CD14-positive monocyte (primary cell): ENCODE measurements at regions of chr3 and their contacts with region 1.

Region 1: DNA sequence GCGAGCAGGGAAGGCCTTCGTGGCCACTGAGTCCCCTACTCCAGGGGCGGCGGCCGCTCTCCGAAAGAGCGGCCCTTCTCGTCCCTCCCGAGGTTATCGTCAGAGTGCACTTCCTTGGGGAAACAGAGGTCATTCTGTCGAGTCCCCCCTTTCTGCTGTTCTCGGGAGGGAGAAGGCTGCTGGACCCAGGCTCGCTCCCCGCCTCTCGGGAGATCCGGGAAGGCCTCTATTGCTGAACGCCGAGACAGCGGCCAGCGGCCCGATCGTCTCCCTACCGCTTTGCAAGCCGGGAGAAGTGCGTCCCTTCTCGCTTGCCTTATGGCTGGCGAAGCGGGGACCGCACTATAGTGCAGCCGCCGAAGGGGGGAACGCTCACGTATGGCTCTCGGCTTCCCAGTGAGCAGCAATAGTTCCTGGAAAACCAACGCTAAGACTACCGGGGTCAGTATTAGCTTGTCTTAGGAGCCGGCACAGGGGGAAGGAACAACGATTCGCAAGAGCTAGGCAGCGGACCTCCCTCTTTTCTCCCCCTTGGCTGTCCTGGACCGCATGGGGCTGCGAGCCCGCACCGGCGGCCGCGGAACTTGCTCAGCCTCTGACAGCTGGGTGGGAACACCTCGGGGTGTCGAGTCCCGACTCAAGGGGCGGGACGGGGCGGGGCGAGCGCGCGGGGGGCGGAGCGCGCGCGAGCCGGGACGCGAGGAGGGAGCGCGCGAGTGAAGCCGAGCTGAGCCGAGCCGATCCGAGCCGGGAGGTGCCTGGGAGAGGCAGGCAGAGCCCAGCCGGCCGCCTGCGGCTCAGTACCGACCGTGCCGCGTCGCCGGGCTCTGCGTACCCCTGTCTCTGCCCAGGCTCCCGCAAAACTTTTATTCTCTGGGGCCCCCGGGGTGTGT is 930 bp upstream of the PPM1L start:
- DNase-seq: peak; percentile 84 to 87 (median 85)
- H3K4me3 ChIP-seq: peak overlapping the region; percentile 61 to 93 (median 70)
- H3K4me3 Mint-ChIP-seq: peak overlapping the region; percentile 98 to 99
- H3K27ac ChIP-seq: peak overlapping the region; percentile 93
- H3K27ac Mint-ChIP-seq: peak overlapping the region; percentile 93 to 98 (median 97)
- H3K4me1 ChIP-seq: peaks cover 31 to 36% of the 10 kb centered on the region in 2 donors
- H3K4me1 Mint-ChIP-seq: peaks cover 38% of the 10 kb centered on the region
- H3K27me3 ChIP-seq: peaks cover 0 to 8% of the 10 kb centered on the region in 2 donors
- H3K27me3 Mint-ChIP-seq: peaks cover 4 to 16% (median 8%) of the 10 kb centered on the region in 3 donors
- CTCF ChIP-seq: no peak

Region 2: GRCh38 chr3:160565442-160566403 is 189.4 kb before region 1 on chr3 and contains the start of gene KPNA4:
- intact Hi-C with region 1: loop called in 1 of 2 experiments (anchors 10 kb)
- DNase-seq: peak; percentile 97 to 99 (median 98)
- H3K4me3 ChIP-seq: peak within 1 kb of the TSS; percentile 83 to 95 (median 85)
- H3K4me3 Mint-ChIP-seq: peak within 1 kb of the TSS; percentile 97 to 98
- H3K27ac ChIP-seq: peak within 1 kb of the TSS; percentile 93 to 96
- H3K27ac Mint-ChIP-seq: peak within 1 kb of the TSS; percentile 96 to 99 (median 98)
- H3K4me1 ChIP-seq: peaks cover 31 to 62% of the 10 kb centered on the region in 2 donors
- H3K4me1 Mint-ChIP-seq: peaks cover 74% of the 10 kb centered on the region
- H3K27me3 ChIP-seq: no peaks in the 10 kb centered on the region
- H3K27me3 Mint-ChIP-seq: peaks cover 0 to 5% (median 0%) of the 10 kb centered on the region in 3 donors
- CTCF ChIP-seq: no peak
- polyA plus RNA-seq, gene KPNA4: 4.4 to 14.7 (median 4.5) TPM

Region 3: DNA sequence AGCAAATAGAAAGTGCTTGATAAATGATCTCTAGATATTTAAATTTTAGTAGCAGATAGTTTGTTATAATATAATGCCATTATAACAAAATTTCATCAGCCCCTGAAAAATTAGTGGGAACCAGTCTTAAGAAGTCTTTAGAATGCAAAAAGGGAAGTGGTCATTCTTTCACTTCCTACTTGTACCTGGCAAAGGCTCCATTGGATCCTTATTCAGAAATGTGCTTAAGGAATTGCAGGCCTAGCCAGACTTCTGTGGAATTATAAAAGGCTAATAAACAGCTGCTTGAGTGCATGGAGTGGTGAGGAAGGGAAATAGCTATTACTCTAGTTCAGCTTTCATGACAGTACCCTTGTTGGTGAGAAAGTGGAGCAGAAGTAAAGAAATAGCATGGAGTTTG is 25.1 kb after region 1 on chr3:
- intact Hi-C with region 1: loop called in 1 of 2 experiments (anchors 2 kb)
- DNase-seq: peak; percentile 39 to 83 (median 69)
- H3K4me3 ChIP-seq: no peak overlapping the region
- H3K4me3 Mint-ChIP-seq: no peak overlapping the region
- H3K27ac ChIP-seq: no peak overlapping the region
- H3K27ac Mint-ChIP-seq: peak overlapping the region in 1 of 7 donors; percentile 9
- H3K4me1 ChIP-seq: peaks cover 21 to 28% of the 10 kb centered on the region in 2 donors
- H3K4me1 Mint-ChIP-seq: peaks cover 28% of the 10 kb centered on the region
- H3K27me3 ChIP-seq: no peaks in the 10 kb centered on the region
- H3K27me3 Mint-ChIP-seq: no peaks in the 10 kb centered on the region
- CTCF ChIP-seq: no peak

Region 4: DNA sequence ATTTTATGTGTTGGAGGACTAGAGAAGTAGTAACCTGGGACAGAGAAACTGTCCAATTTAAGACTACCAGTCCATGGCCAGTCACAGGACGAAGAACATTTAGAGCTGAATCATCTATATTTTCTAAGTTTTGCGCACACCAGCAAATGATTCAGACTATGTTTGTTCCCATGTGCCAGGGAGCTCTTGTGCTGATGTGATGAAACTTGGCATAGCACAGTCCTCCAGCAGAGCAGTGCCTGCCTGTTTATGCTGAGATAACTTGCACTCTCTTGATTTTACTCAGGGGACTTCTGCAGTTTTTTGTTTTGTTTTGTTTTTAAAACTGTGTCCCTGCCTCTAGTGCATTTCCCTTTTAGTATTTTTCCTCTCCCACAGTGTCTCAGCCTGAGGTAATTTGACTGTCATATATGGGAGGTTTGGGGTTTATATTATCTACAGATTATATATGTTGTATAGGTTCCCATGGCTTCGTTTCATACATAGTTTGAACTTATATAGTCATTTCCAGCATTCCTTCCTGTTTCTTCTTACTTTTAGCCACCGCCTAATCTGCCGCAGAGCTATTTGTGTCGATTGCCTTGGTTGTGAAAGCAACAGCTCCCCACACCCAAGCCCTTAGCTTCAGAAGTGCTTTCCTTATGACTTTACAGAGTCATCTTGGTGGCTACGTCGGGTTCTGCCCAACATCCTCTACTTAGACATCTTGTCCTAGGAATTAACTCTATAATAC is 46.5 kb after region 1 on chr3:
- intact Hi-C with region 1: loop called in 1 of 2 experiments (anchors 5 kb)
- DNase-seq: peak; percentile 77 to 85 (median 78)
- H3K4me3 ChIP-seq: peak overlapping the region; percentile 16 to 66 (median 48)
- H3K4me3 Mint-ChIP-seq: peak overlapping the region; percentile 67 to 83
- H3K27ac ChIP-seq: peak overlapping the region; percentile 77 to 94
- H3K27ac Mint-ChIP-seq: peak overlapping the region; percentile 91 to 98 (median 96)
- H3K4me1 ChIP-seq: peaks cover 37 to 45% of the 10 kb centered on the region in 2 donors
- H3K4me1 Mint-ChIP-seq: peaks cover 49% of the 10 kb centered on the region
- H3K27me3 ChIP-seq: no peaks in the 10 kb centered on the region
- H3K27me3 Mint-ChIP-seq: peaks cover 0 to 1% (median 1%) of the 10 kb centered on the region in 3 donors
- CTCF ChIP-seq: no peak

Region 5: DNA sequence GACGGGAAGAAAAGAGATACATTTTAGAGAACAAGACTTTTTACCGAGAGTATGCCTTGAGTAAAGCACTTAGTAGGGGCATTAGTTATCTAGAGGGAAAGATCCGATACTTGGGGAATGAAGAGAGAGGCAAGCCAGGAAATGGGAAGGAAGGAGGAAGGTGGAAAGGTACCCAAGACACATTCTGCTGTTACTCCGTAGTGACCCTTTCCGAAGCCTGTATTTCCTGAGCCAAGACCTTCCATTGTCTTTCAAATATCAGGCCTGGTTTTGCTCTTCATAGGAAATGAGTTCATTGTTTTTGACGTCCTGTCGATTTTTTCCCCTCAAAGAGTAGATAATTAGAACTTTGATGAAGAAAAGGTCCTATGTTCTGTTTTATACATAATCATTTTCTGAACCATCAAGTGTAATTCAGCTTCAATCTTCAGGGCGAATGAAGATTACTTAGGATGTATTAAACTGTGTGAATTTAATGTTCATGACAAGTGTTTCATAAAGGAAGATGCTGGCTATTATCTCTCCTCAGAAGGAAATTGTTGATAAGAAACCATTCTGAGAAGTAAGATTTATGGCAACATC is 96.6 kb after region 1 on chr3:
- intact Hi-C with region 1: no loop called
- DNase-seq: no peak
- H3K4me3 ChIP-seq: no peak overlapping the region
- H3K4me3 Mint-ChIP-seq: no peak overlapping the region
- H3K27ac ChIP-seq: no peak overlapping the region
- H3K27ac Mint-ChIP-seq: no peak overlapping the region
- H3K4me1 ChIP-seq: no peaks in the 10 kb centered on the region
- H3K4me1 Mint-ChIP-seq: no peaks in the 10 kb centered on the region
- H3K27me3 ChIP-seq: no peaks in the 10 kb centered on the region
- H3K27me3 Mint-ChIP-seq: no peaks in the 10 kb centered on the region
- CTCF ChIP-seq: no peak